Activated T-helper 1 cell treated with anti-CD3 and anti-CD28 coated beads, Interleukin-12 subunit alpha, Interleukin-12 subunit beta, Interleukin-2, Interleukin-4 antibody, amounts not matched to agents 30 ng/mL and 10 ng/mL and 1 ng/mL, durations not matched to agents 14 hours and 24 hours and 36 hours (primary cell): ENCODE measurements at regions of chr17 and their contacts with region 1.

Region 1: DNA sequence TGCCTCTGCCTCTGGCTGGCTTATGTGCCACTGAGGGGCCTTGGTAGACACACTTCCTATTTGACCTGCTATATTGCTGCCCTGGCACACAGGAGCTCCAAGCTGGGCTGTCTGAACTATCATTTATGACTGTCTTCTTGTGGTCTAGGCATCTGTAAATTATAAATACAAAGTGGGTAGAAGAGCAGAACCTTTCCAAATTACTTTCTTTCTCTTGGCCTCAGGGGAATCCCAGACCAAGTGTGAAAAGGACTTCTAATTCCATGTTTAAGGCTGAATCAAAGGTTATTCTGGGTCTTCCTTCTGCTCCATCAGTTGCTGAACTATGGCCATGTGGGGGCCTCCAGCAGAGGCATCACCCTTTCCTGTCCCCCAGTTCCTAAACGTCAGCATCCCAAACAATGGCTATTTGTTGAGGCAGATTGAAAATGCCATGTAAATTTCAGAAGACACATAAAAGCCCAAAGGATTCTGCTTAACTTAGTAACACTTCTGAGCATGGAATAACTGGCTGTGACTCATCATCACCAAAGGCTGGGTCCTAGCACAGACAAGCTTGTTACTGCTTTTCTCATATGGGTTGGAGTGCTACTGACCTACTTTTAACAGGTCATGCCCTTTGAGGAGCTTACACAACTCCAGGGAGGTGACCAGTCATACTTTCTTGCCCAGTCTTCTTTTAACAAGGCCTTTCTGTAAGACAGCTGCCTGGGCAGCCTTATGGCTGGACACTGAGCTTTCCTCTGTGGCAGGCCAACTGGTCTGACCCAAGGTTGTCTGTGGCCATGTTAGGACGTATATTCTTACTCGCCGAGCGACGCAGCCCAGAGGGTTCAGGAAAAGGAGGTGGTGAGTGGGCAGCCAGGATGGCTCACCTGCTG is 154.8 kb downstream of the VPS53 start:
- DNase-seq: no peak
- H3K4me3 Mint-ChIP-seq: no peak overlapping the region
- H3K27ac Mint-ChIP-seq: peak overlapping the region; percentile 70
- H3K4me1 Mint-ChIP-seq: peaks cover 28% of the 10 kb centered on the region
- H3K27me3 Mint-ChIP-seq: no peaks in the 10 kb centered on the region

Region 2: GRCh38 chr17:549177-550040 is 10.4 kb before region 1 on chr17:
- intact Hi-C with region 1: loop called (anchors 1 kb)
- DNase-seq: no peak
- H3K4me3 Mint-ChIP-seq: no peak overlapping the region
- H3K27ac Mint-ChIP-seq: no peak overlapping the region
- H3K4me1 Mint-ChIP-seq: peaks cover 17% of the 10 kb centered on the region
- H3K27me3 Mint-ChIP-seq: no peaks in the 10 kb centered on the region

Region 3: GRCh38 chr17:725746-726145 is 166.0 kb after region 1 on chr17:
- intact Hi-C with region 1: no loop called
- DNase-seq: no peak
- H3K4me3 Mint-ChIP-seq: no peak overlapping the region
- H3K27ac Mint-ChIP-seq: no peak overlapping the region
- H3K4me1 Mint-ChIP-seq: peaks cover 1% of the 10 kb centered on the region
- H3K27me3 Mint-ChIP-seq: peaks cover 10% of the 10 kb centered on the region